Head of caudate nucleus (tissue), 42 donors: ENCODE measurements at regions of chr2 and their contacts with region 1.

Region 1: GRCh38 chr2:64311948-64312621 is 141.9 kb upstream of the LGALSL start:
- DNase-seq: peak; percentile 69 to 94 (median 86)

Region 2: DNA sequence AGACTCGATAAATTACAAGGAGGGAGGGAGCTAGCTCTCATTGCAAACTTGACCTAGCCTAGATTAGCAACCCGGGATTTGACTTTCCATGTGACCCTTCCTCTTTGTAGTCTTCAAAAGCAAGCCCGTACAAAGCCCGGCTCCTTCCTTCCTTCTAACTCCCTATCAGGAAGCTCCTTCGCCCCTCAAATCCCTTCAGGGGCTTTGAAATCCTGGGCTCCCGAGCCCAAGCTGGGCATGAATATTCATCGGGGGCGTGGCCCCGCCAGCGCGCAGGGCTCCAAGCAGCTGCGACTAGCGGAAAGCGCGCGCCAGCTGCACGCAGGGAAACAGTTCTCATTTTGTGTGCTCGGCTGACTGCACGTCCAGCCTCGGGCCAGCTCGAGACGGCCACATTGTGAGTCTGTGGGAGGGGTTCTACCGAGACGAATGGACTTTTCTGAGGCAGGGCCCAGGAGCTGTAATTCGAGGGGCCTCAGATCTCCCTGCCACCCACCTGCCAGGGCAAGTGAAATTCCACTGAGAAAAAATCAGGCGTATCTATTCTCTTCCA is 83.9 kb before region 1 on chr2:
- intact Hi-C with region 1: loop called (anchors 10 kb)
- DNase-seq: peak; percentile 86 to 97 (median 93)

Region 3: GRCh38 chr2:64447317-64448040 is 135.4 kb after region 1 on chr2:
- intact Hi-C with region 1: no loop called
- DNase-seq: peak in 6 of 42 donors; percentile 12 to 55 (median 17)